ENCODE measurements at regions of chr11 and their contacts with region 1.

Region 1: GRCh38 chr11:98136357-98136756 is 884.4 kb upstream of the CNTN5 start:
- DNase-seq: no peak
- ATAC-seq: no peak
- H3K4me3 ChIP-seq: no peak overlapping the region
- H3K27ac ChIP-seq: no peak overlapping the region
- H3K4me1 ChIP-seq: no peaks in the 10 kb centered on the region
- H3K27me3 ChIP-seq: no peaks in the 10 kb centered on the region
- CTCF ChIP-seq: no peak
- POLR2A ChIP-seq: no peak
- RAD21 ChIP-seq: no peak

Region 2: DNA sequence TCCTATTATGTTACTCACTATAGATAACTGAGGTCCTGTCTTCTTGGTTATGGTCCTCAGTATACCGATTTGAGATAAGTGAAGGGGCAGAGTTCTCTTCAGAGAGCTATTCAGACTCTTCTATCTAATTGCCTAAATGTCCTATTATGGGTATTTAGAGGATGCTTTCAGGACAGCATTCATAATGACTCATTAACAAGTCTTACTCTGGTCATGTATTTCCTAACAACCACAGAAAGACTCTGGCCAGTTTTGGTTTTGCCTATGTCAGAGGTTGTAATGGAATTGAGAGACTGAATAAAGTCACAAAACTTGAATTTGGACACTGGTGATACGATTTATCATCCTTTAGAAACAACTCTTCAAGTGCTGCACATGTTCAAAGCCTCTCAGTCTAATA is 513.6 kb before region 1 on chr11:
- CTCF ChIA-PET with region 1: no interaction called
- POLR2A ChIA-PET with region 1: no interaction called
- dilution Hi-C with region 1: no loop called
- in situ Hi-C with region 1: no loop called
- intact Hi-C with region 1: no loop called
- DNase-seq: no peak
- ATAC-seq: no peak
- H3K4me3 ChIP-seq: no peak overlapping the region
- H3K27ac ChIP-seq: no peak overlapping the region
- H3K4me1 ChIP-seq: no peaks in the 10 kb centered on the region
- H3K27me3 ChIP-seq: no peaks in the 10 kb centered on the region
- CTCF ChIP-seq: no peak
- POLR2A ChIP-seq: no peak
- RAD21 ChIP-seq: no peak

Region 3: GRCh38 chr11:97909614-97910399 is 226.6 kb before region 1 on chr11:
- CTCF ChIA-PET with region 1: no interaction called
- POLR2A ChIA-PET with region 1: no interaction called
- dilution Hi-C with region 1: no loop called
- in situ Hi-C with region 1: no loop called
- intact Hi-C with region 1: loop called (anchors 10 kb)
- DNase-seq: peak; percentile 57
- ATAC-seq: peak; percentile 75
- H3K4me3 ChIP-seq: no peak overlapping the region
- H3K27ac ChIP-seq: no peak overlapping the region
- H3K4me1 ChIP-seq: no peaks in the 10 kb centered on the region
- H3K27me3 ChIP-seq: no peaks in the 10 kb centered on the region
- CTCF ChIP-seq: no peak
- POLR2A ChIP-seq: no peak
- RAD21 ChIP-seq: no peak